Colonic mucosa (tissue), 4 donors: ENCODE measurements at regions of chr6 and their contacts with region 1.

Region 1: GRCh38 chr6:97059473-97059872 is 134.9 kb downstream of the KLHL32 start:
- DNase-seq: no peak
- H3K4me3 ChIP-seq: no peak overlapping the region
- H3K27ac ChIP-seq: no peak overlapping the region
- H3K4me1 ChIP-seq: no peaks in the 10 kb centered on the region
- H3K27me3 ChIP-seq: no peaks in the 10 kb centered on the region
- CTCF ChIP-seq: peak; percentile 58

Region 2: DNA sequence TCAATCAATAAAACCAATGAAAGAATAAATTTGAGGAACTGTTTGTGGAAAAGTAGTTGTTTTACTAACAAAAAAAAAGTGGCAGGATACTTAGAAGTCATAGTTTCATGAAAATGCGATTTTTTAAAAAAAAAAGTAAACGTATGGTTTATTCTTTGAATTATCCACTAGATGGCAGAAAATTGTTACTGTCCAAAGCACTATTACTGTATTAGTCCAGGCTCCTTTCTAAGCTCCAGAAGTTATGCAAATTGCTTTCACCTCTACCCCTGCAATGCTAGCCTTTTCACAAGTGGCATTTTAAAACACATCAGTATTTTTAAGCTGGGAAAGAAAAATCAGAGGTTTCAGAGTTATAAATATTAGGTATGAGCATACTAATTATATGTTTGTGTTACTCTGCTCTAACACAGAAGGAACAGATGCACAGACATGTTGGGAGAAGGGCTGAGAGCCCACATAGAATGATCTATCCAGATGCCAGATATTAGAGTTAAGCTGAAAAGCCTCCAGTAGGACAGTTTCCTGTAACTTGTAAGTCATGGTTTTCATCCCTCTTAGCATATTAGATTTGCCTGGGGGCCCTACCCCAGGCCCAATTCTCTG is 432.6 kb before region 1 on chr6:
- intact Hi-C with region 1: loop called (anchors 2 kb)
- DNase-seq: no peak
- H3K4me3 ChIP-seq: no peak overlapping the region
- H3K27ac ChIP-seq: no peak overlapping the region
- H3K4me1 ChIP-seq: no peaks in the 10 kb centered on the region
- H3K27me3 ChIP-seq: no peaks in the 10 kb centered on the region
- CTCF ChIP-seq: peak; percentile 18

Region 3: GRCh38 chr6:96659084-96659845 is 400.2 kb before region 1 on chr6:
- intact Hi-C with region 1: no loop called
- DNase-seq: no peak
- H3K4me3 ChIP-seq: no peak overlapping the region
- H3K27ac ChIP-seq: no peak overlapping the region
- H3K4me1 ChIP-seq: no peaks in the 10 kb centered on the region
- H3K27me3 ChIP-seq: no peaks in the 10 kb centered on the region
- CTCF ChIP-seq: no peak

Region 4: GRCh38 chr6:96907498-96907897 is 152.0 kb before region 1 on chr6:
- intact Hi-C with region 1: loop called (anchors 5 kb)
- DNase-seq: no peak
- H3K4me3 ChIP-seq: no peak overlapping the region
- H3K27ac ChIP-seq: no peak overlapping the region
- H3K4me1 ChIP-seq: no peaks in the 10 kb centered on the region
- H3K27me3 ChIP-seq: no peaks in the 10 kb centered on the region
- CTCF ChIP-seq: no peak